Activated CD4-positive, alpha-beta T cell treated with anti-CD3 and anti-CD28 coated beads for 36 hours (primary cell): ENCODE measurements at regions of chr12 and their contacts with region 1.

Region 1: DNA sequence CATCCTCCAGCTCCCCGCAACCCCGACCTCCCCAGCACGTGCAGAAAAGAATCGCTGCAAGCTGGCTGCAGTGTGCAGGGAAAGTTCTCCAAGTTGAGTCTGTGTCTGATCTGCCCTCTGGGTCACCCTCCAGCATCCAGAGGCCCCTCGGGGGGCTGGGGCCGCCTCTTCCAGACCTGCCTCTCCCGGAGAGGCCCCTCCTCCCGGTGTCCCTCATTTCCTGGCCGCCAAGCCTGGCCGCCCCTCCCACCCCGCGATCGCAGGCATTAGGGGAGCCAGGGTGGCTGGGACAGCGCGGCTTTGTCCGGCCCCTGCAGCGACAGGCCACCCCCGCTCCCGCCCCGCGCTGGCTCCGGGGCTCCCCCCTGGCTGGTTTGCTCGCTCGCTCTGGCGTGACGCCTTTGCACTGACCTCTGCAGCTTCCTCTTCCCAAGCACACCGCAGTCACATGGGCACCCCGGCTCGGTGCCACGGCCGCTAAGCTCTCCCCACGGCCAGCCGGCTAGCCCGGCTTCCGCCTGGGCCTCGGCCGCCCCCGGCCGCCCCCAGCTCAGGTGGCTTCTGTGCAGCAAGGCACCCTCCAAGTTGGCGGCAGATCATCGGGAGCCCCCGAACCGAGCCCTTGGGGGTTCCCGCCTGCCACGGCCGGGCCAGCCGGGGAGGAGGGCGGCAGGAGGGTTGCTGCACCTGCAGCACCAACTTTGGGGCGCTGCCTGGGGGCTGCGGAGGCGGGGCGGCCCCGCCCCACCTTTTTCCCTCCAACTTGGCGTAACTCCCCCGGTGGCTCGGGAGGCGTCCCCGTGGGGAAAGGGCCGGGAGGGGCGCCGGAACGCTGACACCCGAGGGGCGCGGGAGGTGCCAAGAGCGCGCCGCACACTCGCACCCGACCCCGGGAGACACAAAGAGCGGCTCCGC is 43.7 kb downstream of the KDM2B start:
- DNase-seq: peak; percentile 76
- ATAC-seq: peak; percentile 40
- H3K4me3 Mint-ChIP-seq: peak overlapping the region; percentile 67
- H3K27ac Mint-ChIP-seq: peak overlapping the region; percentile 62
- H3K4me1 Mint-ChIP-seq: peaks cover 48% of the 10 kb centered on the region
- H3K27me3 Mint-ChIP-seq: no peaks in the 10 kb centered on the region

Region 2: GRCh38 chr12:121314431-121314830 is 222.7 kb before region 1 on chr12:
- CTCF ChIA-PET with region 1: no interaction called
- POLR2A ChIA-PET with region 1: no interaction called
- intact Hi-C with region 1: no loop called
- DNase-seq: no peak
- ATAC-seq: no peak
- H3K4me3 Mint-ChIP-seq: no peak overlapping the region
- H3K27ac Mint-ChIP-seq: peak overlapping the region; percentile 33
- H3K4me1 Mint-ChIP-seq: peaks cover 16% of the 10 kb centered on the region
- H3K27me3 Mint-ChIP-seq: no peaks in the 10 kb centered on the region

Region 3: DNA sequence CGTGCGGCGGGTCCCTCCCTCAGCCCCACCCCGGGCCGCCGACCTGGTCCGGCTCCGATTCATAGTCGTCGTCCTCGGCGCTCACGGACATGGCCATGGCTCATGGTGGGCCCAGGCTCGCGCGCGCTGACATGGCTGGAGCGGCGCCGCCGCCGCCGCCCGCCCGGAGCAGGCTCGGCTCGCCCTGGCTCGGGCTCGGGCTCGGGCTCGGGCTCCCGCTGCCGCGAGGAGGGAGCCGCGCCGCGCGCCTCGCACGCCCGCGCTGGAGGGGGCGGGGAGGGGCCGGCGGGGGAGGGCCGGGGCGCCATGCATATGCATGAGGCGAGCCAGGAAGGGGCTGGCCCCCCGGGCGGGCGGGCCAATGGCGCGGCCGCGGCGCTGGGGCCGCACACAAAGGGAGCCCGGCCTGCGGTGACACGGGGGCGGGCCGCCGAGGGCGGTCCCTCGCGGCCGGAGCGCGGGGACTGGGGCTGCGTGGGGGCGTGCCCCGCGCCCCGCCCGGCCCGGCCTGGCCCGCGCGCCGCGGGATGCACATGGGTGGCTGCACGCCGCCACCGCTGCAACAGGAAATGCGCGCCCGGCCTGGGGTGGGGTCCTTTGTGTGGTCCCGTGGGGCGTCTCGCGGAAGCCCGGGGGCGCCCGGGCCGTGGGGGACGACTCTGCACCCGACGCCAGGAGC is 69.9 kb before region 1 on chr12:
- CTCF ChIA-PET with region 1: no interaction called
- POLR2A ChIA-PET with region 1: no interaction called
- intact Hi-C with region 1: loop called in 1 of 2 experiments (anchors 2 kb)
- DNase-seq: peak; percentile 93
- ATAC-seq: peak; percentile 94
- H3K4me3 Mint-ChIP-seq: peak overlapping the region; percentile 57
- H3K27ac Mint-ChIP-seq: no peak overlapping the region
- H3K4me1 Mint-ChIP-seq: peaks cover 20% of the 10 kb centered on the region
- H3K27me3 Mint-ChIP-seq: no peaks in the 10 kb centered on the region

Region 4: DNA sequence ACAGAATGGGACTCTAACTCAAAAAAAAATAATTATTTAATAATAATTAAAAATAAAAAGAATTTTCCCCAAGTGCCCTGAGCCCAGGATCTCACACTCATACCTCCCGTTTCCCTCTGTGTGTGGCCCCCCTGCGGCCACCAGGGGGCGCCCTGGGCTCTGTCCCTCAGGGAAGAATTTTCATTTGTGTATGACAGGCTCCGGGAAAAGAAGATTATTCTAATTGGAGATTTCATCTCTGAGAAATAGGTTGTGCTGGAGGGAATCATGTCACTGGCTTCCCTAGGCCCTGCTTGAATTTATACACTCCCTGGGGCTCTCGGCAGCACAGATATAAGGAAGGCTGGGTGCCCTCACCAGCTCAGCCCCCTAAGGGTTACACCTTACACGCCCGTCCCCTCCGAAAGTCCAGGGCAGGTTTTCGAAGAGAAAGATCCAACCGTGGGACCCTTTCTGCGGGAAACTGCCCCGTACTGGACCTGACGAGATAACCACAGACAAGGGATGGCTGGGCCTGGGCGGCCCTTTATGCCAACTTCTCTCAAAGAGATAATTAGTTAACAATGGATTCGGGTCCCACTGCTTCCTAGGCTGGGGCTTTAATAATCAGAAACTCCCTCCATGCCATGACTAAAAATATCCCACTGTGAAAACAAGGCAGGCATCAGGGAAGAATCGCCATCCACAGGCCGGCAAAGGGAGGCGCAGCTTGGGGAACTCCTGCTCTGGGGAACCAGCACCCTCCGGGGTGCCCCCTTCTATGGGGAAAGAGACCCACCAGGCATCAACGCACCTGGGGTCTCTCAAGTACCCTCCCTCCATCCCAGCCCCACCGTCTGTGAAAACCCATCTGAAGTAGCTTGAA is 37.0 kb before region 1 on chr12:
- CTCF ChIA-PET with region 1: interaction called, 4 read pairs
- POLR2A ChIA-PET with region 1: interaction called, 4 read pairs
- intact Hi-C with region 1: loop called in 1 of 2 experiments (anchors 2 kb)
- DNase-seq: peak; percentile 84
- ATAC-seq: peak; percentile 86
- H3K4me3 Mint-ChIP-seq: no peak overlapping the region
- H3K27ac Mint-ChIP-seq: no peak overlapping the region
- H3K4me1 Mint-ChIP-seq: peaks cover 13% of the 10 kb centered on the region
- H3K27me3 Mint-ChIP-seq: no peaks in the 10 kb centered on the region

Region 5: GRCh38 chr12:121579981-121580868 is 43.1 kb after region 1 on chr12:
- CTCF ChIA-PET with region 1: no interaction called
- POLR2A ChIA-PET with region 1: interaction called, 3 read pairs
- intact Hi-C with region 1: loop called in 1 of 2 experiments (anchors 2 kb)
- DNase-seq: peak; percentile 87
- ATAC-seq: peak; percentile 76
- H3K4me3 Mint-ChIP-seq: peak overlapping the region; percentile 83
- H3K27ac Mint-ChIP-seq: peak overlapping the region; percentile 99
- H3K4me1 Mint-ChIP-seq: peaks cover 24% of the 10 kb centered on the region
- H3K27me3 Mint-ChIP-seq: no peaks in the 10 kb centered on the region

Region 6: DNA sequence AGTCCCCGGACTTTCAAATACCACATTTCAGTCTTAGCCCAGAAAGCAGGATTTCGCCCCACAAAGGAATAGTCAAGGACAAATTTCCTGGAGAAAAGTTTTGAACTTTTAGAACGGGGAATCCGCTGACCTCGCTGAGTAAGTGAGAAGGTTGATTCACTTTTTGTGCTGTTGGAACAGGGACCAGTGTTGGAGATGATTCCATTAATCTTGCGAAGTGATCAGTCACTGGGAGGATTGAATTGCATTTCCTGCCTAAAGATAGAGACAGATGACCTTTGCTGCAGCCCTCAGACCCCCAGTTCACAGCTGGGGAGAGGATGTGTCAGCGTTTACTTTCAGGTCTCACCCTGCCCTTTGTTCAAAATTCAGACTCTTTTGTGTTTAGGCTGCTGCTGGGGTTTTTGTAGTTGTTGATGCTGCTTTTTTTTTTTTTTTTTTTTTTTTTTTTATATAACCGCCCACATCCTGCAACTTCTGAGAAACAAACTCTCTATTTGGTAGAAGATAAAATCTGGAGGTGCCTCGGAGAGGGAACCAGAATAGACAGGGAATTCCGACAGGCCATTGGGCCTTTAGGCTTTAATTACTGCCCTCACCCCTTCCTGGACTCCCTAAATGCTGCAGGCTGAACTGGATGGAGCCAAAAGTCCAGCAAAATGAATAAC is 53.5 kb after region 1 on chr12:
- CTCF ChIA-PET with region 1: no interaction called
- POLR2A ChIA-PET with region 1: no interaction called
- intact Hi-C with region 1: loop called in 1 of 2 experiments (anchors 1 kb)
- DNase-seq: peak; percentile 79
- ATAC-seq: peak; percentile 82
- H3K4me3 Mint-ChIP-seq: peak overlapping the region; percentile 75
- H3K27ac Mint-ChIP-seq: peak overlapping the region; percentile 98
- H3K4me1 Mint-ChIP-seq: peaks cover 32% of the 10 kb centered on the region
- H3K27me3 Mint-ChIP-seq: no peaks in the 10 kb centered on the region

Region 7: GRCh38 chr12:121678716-121679580 is 141.8 kb after region 1 on chr12:
- CTCF ChIA-PET with region 1: no interaction called
- POLR2A ChIA-PET with region 1: interaction called, 5 read pairs
- intact Hi-C with region 1: loop called in 1 of 2 experiments (anchors 1 kb)
- DNase-seq: peak; percentile 32
- ATAC-seq: peak; percentile 21
- H3K4me3 Mint-ChIP-seq: no peak overlapping the region
- H3K27ac Mint-ChIP-seq: peak overlapping the region; percentile 23
- H3K4me1 Mint-ChIP-seq: peaks cover 7% of the 10 kb centered on the region
- H3K27me3 Mint-ChIP-seq: no peaks in the 10 kb centered on the region

Region 8: DNA sequence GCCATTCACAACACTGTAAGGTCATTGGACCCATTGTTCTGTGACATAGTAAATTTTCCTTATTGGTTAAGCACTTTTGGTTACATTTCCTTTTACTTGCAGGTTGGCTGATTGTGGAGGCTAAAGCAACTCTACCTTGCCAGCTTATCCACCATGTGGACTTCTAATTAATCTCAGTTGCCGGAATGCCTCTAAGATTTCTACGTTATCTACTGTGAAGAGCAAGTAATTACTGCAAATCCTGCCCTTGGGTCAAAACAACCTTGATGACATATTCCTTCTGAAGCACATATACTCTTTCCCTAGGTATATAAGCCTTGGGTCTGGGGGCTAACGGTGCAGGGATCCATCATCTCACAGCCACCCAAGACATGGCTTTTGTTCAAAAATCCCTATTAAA is 151.8 kb after region 1 on chr12:
- CTCF ChIA-PET with region 1: no interaction called
- POLR2A ChIA-PET with region 1: no interaction called
- intact Hi-C with region 1: loop called in 1 of 2 experiments (anchors 5 kb)
- DNase-seq: no peak
- ATAC-seq: no peak
- H3K4me3 Mint-ChIP-seq: no peak overlapping the region
- H3K27ac Mint-ChIP-seq: no peak overlapping the region
- H3K4me1 Mint-ChIP-seq: peaks cover 7% of the 10 kb centered on the region
- H3K27me3 Mint-ChIP-seq: no peaks in the 10 kb centered on the region

Region 9: GRCh38 chr12:121748571-121749253 is 211.6 kb after region 1 on chr12:
- CTCF ChIA-PET with region 1: no interaction called
- POLR2A ChIA-PET with region 1: no interaction called
- intact Hi-C with region 1: no loop called
- DNase-seq: peak; percentile 69
- ATAC-seq: peak; percentile 98
- H3K4me3 Mint-ChIP-seq: no peak overlapping the region
- H3K27ac Mint-ChIP-seq: peak overlapping the region; percentile 71
- H3K4me1 Mint-ChIP-seq: peaks cover 10% of the 10 kb centered on the region
- H3K27me3 Mint-ChIP-seq: no peaks in the 10 kb centered on the region